ENCODE measurements at regions of chr5 and their contacts with region 1.

Region 1: GRCh38 chr5:31825518-31826068 is 186.7 kb downstream of the PDZD2 start:
- DNase-seq: peak; percentile 61
- ATAC-seq: peak; percentile 93
- H3K4me3 ChIP-seq: no peak overlapping the region
- H3K27ac ChIP-seq: no peak overlapping the region
- H3K4me1 ChIP-seq: no peaks in the 10 kb centered on the region
- H3K27me3 ChIP-seq: no peaks in the 10 kb centered on the region
- CTCF ChIP-seq: peak; percentile 70 to 81 (median 73)
- POLR2A ChIP-seq: no peak
- RAD21 ChIP-seq: peak; percentile 87

Region 2: DNA sequence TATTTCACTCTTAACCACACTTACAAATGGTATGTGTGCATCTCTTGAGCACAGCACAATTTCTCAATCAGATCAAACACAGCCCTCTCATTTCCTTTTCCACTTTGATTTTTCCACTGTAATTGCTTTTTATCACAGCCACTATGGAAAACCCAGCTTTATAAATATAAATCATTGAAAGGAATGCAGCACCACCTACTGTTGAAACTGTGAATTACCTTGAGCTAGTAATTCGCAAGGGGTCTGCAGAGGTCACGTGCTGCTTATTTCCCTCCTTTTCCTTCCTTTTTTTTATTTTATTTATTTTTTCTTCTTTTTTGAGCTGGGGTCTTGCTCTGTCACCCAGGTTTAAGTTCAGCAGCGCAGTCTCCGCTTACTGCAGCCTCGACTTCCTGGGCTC is 555.2 kb before region 1 on chr5:
- CTCF ChIA-PET with region 1: no interaction called
- POLR2A ChIA-PET with region 1: no interaction called
- RAD21 ChIA-PET with region 1: no interaction called
- intact Hi-C with region 1: no loop called
- DNase-seq: no peak
- ATAC-seq: no peak
- H3K4me3 ChIP-seq: no peak overlapping the region
- H3K27ac ChIP-seq: no peak overlapping the region
- H3K4me1 ChIP-seq: no peaks in the 10 kb centered on the region
- H3K27me3 ChIP-seq: no peaks in the 10 kb centered on the region; the same call in 1 of the 2 replicates
- CTCF ChIP-seq: peak in 2 of 3 experiments; percentile 44 to 61; a peak in 4 of 6 replicates
- POLR2A ChIP-seq: no peak
- RAD21 ChIP-seq: peak; percentile 27; the same call in 1 of the 2 replicates

Region 3: GRCh38 chr5:32329308-32329834 is 503.8 kb after region 1 on chr5:
- CTCF ChIA-PET with region 1: no interaction called
- POLR2A ChIA-PET with region 1: no interaction called
- RAD21 ChIA-PET with region 1: no interaction called
- intact Hi-C with region 1: loop called (anchors 5 kb)
- DNase-seq: peak; percentile 54
- ATAC-seq: peak; percentile 90
- H3K4me3 ChIP-seq: no peak overlapping the region
- H3K27ac ChIP-seq: no peak overlapping the region
- H3K4me1 ChIP-seq: peaks cover 11 to 25% of the 10 kb centered on the region in 2 experiments
- H3K27me3 ChIP-seq: no peaks in the 10 kb centered on the region
- CTCF ChIP-seq: peak; percentile 67 to 79 (median 77)
- POLR2A ChIP-seq: no peak
- RAD21 ChIP-seq: peak; percentile 86

Measured in HCT116 (cell line).